Sigmoid colon (tissue), 7 donors: ENCODE measurements at regions of chr14 and their contacts with region 1.

Region 1: DNA sequence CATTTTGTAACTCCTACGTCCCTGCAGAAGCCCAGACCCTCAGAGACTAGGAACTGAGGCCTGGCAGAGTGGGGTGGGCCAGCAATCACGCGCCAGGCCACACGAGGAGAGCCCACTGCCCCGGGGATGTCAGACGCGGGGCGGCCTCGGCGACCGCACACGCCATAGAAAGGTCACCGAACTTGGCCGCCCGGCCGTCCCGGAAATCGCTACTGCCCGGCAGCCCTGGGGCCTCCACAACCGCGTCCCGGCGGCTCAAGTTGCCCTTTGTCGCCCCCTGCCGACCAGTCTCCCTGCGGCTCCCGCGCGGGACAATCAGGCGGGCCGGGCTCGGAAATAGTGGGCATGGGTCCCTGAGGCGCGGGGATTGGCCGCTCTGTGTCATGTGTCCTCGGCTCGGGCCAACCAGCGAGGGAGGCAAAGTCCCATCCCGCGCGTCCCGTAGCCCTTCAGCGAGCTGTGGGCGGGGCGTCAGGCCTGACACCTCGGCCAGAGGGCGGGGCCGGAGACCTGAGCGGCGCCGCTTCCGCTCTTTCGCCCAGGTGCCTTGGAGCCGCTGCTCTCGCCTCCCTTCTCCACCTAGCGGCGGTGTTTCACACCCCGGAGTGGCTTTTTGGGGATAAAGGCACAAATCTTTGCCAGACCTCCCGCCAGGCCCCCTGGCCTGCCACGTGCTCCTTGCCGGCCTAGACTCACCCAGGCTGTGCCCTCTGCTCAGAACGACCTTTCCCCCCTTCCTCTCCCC is 33.4 kb upstream of the DEGS2 start:
- DNase-seq: peak; percentile 99
- H3K4me3 ChIP-seq: peak overlapping the region; percentile 18 to 59 (median 51)
- H3K27ac ChIP-seq: peak overlapping the region; percentile 87 to 92 (median 88)
- H3K4me1 ChIP-seq: peaks cover 0 to 17% (median 11%) of the 10 kb centered on the region in 4 donors
- H3K27me3 ChIP-seq: no peaks in the 10 kb centered on the region
- CTCF ChIP-seq: peak; percentile 83 to 94 (median 86)
- EP300 ChIP-seq: no peak
- POLR2A ChIP-seq: peak; percentile 42 to 48

Region 2: DNA sequence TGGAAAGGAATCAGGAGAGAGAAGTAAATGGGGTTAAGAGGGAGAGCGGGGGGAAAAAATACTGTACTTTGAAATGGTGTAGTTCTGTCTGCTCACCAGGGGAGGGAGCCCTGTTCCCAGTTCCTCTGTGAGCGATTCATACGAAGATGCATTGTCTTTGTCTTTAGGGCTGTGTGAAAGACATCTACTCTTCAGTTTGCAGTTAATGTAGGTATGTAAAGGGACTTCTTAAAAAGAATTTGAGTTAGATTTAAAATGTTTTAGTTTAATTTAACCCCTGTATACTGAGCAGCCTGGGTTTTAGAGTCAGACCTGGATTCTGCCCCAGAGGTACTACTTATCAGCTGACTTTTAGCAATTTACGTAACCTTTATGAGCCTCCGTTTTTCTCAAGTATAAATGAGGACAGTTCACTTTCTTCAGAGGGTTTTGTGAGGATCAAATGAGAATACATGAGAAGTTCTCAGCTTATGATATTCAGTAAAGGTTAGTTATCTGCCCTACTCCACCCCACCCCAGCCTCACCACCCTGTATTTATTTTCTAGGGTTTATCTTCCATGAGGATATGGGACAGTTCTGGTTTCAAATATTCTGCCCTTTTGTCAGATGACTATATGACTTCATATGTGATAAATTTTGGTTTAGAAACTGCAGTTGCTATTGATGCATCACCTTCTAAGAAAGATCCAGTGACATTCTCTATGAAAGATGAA is 210.2 kb before region 1 on chr14:
- intact Hi-C with region 1: loop called (anchors 1 kb)
- DNase-seq: no peak
- H3K4me3 ChIP-seq: no peak overlapping the region
- H3K27ac ChIP-seq: no peak overlapping the region
- H3K4me1 ChIP-seq: peaks cover 0 to 4% (median 0%) of the 10 kb centered on the region in 4 donors
- H3K27me3 ChIP-seq: no peaks in the 10 kb centered on the region
- CTCF ChIP-seq: peak; percentile 86 to 94 (median 90)
- EP300 ChIP-seq: no peak
- POLR2A ChIP-seq: no peak

Region 3: GRCh38 chr14:100067971-100068959 is 124.6 kb before region 1 on chr14:
- intact Hi-C with region 1: no loop called
- DNase-seq: no peak
- H3K4me3 ChIP-seq: no peak overlapping the region
- H3K27ac ChIP-seq: peak overlapping the region; percentile 2 to 20 (median 10)
- H3K4me1 ChIP-seq: no peaks in the 10 kb centered on the region
- H3K27me3 ChIP-seq: no peaks in the 10 kb centered on the region
- CTCF ChIP-seq: no peak
- EP300 ChIP-seq: no peak
- POLR2A ChIP-seq: no peak

Region 4: DNA sequence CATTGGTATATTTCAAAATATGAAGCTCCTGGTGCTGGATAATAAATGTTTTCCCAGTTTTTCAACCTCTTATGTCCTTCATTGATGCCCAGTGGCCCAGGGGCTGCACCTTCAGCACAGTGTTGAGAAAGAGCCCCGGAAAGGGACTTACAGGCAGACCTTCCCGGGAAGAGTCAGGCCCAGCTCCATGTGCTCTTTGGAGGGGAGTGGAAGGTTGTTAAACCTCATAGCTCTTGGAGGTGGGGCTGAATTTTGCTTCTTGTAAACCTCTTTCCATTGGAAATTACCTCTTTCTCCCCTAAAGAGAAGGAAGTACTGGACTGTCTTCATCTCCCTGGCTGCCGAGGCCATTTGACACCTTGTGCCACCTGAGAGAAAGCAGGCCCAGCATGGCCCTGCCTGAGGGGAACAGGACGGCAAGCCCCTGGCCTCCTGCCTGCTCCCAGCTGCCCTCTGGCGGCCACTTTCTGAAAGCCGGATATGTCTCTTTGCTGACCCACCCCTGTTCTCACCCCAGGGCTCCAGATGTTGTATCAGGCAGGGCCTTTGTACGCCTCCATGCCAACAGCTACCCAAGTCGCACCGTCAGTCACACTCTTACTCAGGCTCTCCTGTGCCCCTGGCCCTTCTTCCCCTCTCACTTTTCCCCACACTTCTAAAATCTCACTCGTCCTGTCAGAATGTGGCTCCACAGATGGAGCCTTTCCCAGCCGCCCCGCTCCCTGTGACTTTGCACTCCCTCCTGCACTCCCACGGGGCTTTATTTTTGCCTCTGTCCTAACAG is 84.6 kb before region 1 on chr14:
- intact Hi-C with region 1: loop called (anchors 5 kb)
- DNase-seq: peak; percentile 88
- H3K4me3 ChIP-seq: no peak overlapping the region
- H3K27ac ChIP-seq: no peak overlapping the region
- H3K4me1 ChIP-seq: peaks cover 0 to 67% (median 52%) of the 10 kb centered on the region in 4 donors
- H3K27me3 ChIP-seq: no peaks in the 10 kb centered on the region
- CTCF ChIP-seq: peak; percentile 79 to 91 (median 84)
- EP300 ChIP-seq: no peak
- POLR2A ChIP-seq: no peak

Region 5: GRCh38 chr14:100239840-100240724 is 47.2 kb after region 1 on chr14:
- intact Hi-C with region 1: loop called (anchors 2 kb)
- DNase-seq: peak; percentile 96
- H3K4me3 ChIP-seq: peak overlapping the region; percentile 75 to 100 (median 98)
- H3K27ac ChIP-seq: peak overlapping the region; percentile 98 to 100 (median 98)
- H3K4me1 ChIP-seq: peaks cover 0 to 57% (median 55%) of the 10 kb centered on the region in 4 donors
- H3K27me3 ChIP-seq: no peaks in the 10 kb centered on the region
- CTCF ChIP-seq: peak; percentile 39 to 75 (median 44)
- EP300 ChIP-seq: peak in 2 of 4 donors; percentile 30 to 80
- POLR2A ChIP-seq: peak; percentile 11 to 26